K562 (cell line): ENCODE measurements at regions of chr4 and their contacts with region 1.

Region 1: GRCh38 chr4:53196882-53197771 is 168.7 kb downstream of the SCFD2 start:
- DNase-seq: peak; percentile 49 to 77 (median 56)
- ATAC-seq: peak; percentile 86
- H3K4me3 ChIP-seq: no peak overlapping the region
- H3K27ac ChIP-seq: no peak overlapping the region
- H3K4me1 ChIP-seq: no peaks in the 10 kb centered on the region
- H3K27me3 ChIP-seq: no peaks in the 10 kb centered on the region
- CTCF ChIP-seq: peak; percentile 57 to 83 (median 60); a peak in 5 of 6 replicates
- EP300 ChIP-seq: no peak
- POLR2A ChIP-seq: no peak
- RAD21 ChIP-seq: peak; percentile 77 to 84

Region 2: GRCh38 chr4:53015681-53016080 is 181.4 kb before region 1 on chr4:
- CTCF ChIA-PET with region 1: no interaction called
- POLR2A ChIA-PET with region 1: no interaction called
- in situ Hi-C with region 1: no loop called
- intact Hi-C with region 1: loop called (anchors 5 kb)
- DNase-seq: peak in 2 of 4 experiments; percentile 25 to 55
- ATAC-seq: peak; percentile 57; the same call in 1 of the 3 replicates
- H3K4me3 ChIP-seq: no peak overlapping the region
- H3K27ac ChIP-seq: no peak overlapping the region
- H3K4me1 ChIP-seq: peaks cover 0 to 12% of the 10 kb centered on the region in 2 experiments; a peak in 2 of 5 replicates
- H3K27me3 ChIP-seq: no peaks in the 10 kb centered on the region
- CTCF ChIP-seq: peak; percentile 48 to 83 (median 68); a peak in 5 of 6 replicates
- EP300 ChIP-seq: no peak
- POLR2A ChIP-seq: no peak
- RAD21 ChIP-seq: peak; percentile 79 to 88

Region 3: DNA sequence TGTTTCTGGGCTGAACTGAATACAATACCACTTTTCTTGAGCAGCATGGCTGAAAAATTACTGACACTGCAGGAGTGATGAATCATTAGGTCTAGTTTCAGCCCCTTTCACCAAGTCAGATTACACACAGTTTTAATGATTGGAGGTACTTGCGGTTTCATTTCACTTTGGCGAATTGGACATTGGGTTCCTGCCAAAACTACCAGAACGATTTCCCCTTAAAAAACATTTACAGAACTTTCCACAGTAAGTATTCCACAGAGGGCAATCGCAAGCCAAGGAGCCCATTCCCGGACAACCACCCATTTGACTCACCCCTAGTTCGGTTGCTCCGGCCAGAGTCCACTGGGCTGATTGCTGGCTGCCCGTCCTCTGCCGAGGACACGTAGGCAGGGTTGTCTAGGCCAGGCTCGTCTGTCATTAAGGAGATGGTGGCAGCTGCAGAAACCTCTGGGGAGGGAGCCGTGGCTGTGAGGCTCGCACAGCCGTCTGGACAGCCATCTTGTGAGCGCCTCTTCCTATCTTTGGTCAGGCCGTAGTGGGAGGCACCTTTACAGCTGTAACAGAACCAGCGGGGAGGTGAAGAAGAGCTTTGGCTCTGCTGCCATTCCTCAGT is 310.7 kb after region 1 on chr4:
- CTCF ChIA-PET with region 1: no interaction called
- POLR2A ChIA-PET with region 1: no interaction called
- in situ Hi-C with region 1: no loop called
- intact Hi-C with region 1: loop called (anchors 10 kb)
- DNase-seq: peak in 3 of 4 experiments; percentile 10 to 38 (median 31)
- ATAC-seq: peak; percentile 91
- H3K4me3 ChIP-seq: peak overlapping the region; percentile 35
- H3K27ac ChIP-seq: peak overlapping the region; percentile 60; the same call in 2 of the 3 replicates
- H3K4me1 ChIP-seq: peaks cover 4 to 11% of the 10 kb centered on the region in 2 experiments
- H3K27me3 ChIP-seq: no peaks in the 10 kb centered on the region
- CTCF ChIP-seq: no peak
- EP300 ChIP-seq: no peak
- POLR2A ChIP-seq: no peak
- RAD21 ChIP-seq: no peak

Region 4: DNA sequence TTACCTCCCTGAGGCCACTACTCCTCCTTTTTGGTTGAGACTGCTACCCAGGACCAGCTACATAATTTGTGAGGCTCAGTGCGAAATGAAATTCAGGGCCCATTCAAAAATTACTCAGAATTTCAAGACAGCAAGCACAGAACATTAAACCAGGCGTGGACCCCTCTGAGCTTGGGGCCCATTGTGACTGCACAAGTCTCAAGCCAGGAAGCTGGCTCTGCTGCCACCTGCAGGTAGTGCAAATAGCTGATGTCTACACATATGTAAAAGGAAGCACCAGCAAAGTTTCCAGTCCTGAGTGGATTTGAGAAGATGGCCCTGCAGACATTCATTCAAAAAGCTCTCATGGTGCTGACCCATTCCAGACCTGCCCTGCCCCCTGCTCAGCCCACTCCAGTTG is 607.6 kb after region 1 on chr4:
- CTCF ChIA-PET with region 1: no interaction called
- POLR2A ChIA-PET with region 1: no interaction called
- in situ Hi-C with region 1: no loop called
- intact Hi-C with region 1: loop called (anchors 1 kb)
- DNase-seq: peak; percentile 32 to 57 (median 34)
- ATAC-seq: peak; percentile 89
- H3K4me3 ChIP-seq: no peak overlapping the region
- H3K27ac ChIP-seq: no peak overlapping the region
- H3K4me1 ChIP-seq: no peaks in the 10 kb centered on the region
- H3K27me3 ChIP-seq: peaks cover 0 to 1% of the 10 kb centered on the region in 2 experiments; a peak in 1 of 5 replicates
- CTCF ChIP-seq: peak; percentile 58 to 71 (median 68)
- EP300 ChIP-seq: no peak
- POLR2A ChIP-seq: no peak
- RAD21 ChIP-seq: peak; percentile 67 to 71

Region 5: DNA sequence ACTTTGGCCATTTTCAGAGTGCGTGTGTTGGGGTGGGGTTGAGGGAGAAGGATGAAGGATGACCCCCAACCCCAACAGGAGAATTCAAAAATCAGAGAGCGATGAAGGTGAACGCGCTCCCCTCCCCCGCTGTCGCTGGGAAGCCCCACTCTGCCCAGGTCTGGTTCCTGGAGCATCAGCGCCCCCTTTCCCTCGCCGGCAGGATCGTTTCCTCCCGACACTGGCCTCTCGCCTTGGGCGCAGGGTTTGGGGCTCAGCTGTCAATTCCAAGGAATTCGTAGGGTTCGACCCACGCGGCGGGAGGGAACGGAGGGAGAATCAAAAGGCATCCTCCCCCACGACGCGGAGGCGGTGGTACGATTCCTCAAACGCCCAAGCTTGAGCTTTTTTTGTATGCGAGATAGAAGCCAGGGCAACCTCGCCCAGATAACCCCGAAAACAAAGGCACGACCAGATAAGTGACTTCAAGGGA is 1031.0 kb after region 1 on chr4:
- CTCF ChIA-PET with region 1: interaction called, 6 read pairs
- POLR2A ChIA-PET with region 1: no interaction called
- in situ Hi-C with region 1: loop called (anchors 5 kb)
- intact Hi-C with region 1: loop called (anchors 1 kb)
- DNase-seq: peak; percentile 32 to 61 (median 57)
- ATAC-seq: peak; percentile 91
- H3K4me3 ChIP-seq: no peak overlapping the region
- H3K27ac ChIP-seq: no peak overlapping the region
- H3K4me1 ChIP-seq: peaks cover 0 to 17% of the 10 kb centered on the region in 2 experiments; a peak in 2 of 5 replicates
- H3K27me3 ChIP-seq: peaks cover 31 to 72% of the 10 kb centered on the region in 2 experiments
- CTCF ChIP-seq: peak; percentile 61 to 74 (median 72)
- EP300 ChIP-seq: no peak
- POLR2A ChIP-seq: no peak
- RAD21 ChIP-seq: peak; percentile 43 to 63